Natural killer cell (primary cell): ENCODE measurements at regions of chr19 and their contacts with region 1.

Region 1: DNA sequence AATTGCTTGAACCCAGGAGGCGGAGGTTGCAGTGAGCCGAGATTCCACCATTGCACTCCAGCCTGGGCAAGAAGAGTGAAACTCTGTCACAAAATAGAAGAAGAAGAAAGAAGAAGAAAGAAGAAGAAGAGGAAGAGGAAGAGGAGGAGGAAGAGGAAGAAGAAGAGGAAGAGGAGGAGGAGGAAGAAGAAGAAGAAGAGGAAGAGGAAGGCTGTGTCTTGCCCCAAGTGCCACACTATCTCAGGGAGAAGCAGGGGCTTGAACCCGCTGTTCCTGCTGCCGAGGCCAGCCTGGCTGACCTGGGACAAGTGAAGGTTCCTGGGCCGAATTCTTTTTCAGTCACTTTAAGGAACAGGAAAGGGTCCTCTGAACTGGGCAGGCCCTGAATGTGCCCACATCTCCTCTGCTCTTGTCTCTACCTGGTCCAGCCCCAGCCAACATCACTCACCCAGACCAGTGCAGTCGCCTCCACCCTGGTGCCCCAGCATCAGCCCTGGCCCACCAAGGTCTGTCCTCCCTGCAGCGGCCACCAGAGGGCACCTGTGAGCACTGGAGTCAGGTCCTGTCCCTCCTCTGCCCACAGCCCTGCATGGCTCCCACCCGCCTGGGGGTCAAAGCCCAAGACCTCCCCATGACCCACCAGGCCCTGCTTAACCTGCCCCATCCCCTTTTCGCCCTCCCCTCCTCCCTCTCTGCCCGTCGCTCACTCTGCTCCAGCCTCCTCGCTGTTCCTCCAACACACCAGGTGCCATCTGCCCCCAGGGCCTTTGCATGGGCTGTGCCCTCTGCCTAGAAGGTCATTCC is 20.0 kb downstream of the TICAM1 start:
- DNase-seq: peak; percentile 88 to 89
- ATAC-seq: peak; percentile 77 to 87 (median 83)
- H3K4me3 ChIP-seq: no peak overlapping the region
- H3K4me3 Mint-ChIP-seq: no peak overlapping the region
- H3K27ac ChIP-seq: no peak overlapping the region
- H3K27ac Mint-ChIP-seq: no peak overlapping the region
- H3K4me1 ChIP-seq: peaks cover 16% of the 10 kb centered on the region
- H3K4me1 Mint-ChIP-seq: peaks cover 5 to 26% of the 10 kb centered on the region in 2 donors
- H3K27me3 ChIP-seq: no peaks in the 10 kb centered on the region
- H3K27me3 Mint-ChIP-seq: no peaks in the 10 kb centered on the region
- CTCF ChIP-seq: peak; percentile 85

Region 2: GRCh38 chr19:4851551-4852290 is 40.2 kb after region 1 on chr19:
- intact Hi-C with region 1: loop called (anchors 1 kb)
- DNase-seq: peak; percentile 74 to 87
- ATAC-seq: peak; percentile 78 to 97 (median 94)
- H3K4me3 ChIP-seq: no peak overlapping the region
- H3K4me3 Mint-ChIP-seq: no peak overlapping the region
- H3K27ac ChIP-seq: no peak overlapping the region
- H3K27ac Mint-ChIP-seq: no peak overlapping the region
- H3K4me1 ChIP-seq: no peaks in the 10 kb centered on the region
- H3K4me1 Mint-ChIP-seq: peaks cover 0 to 5% of the 10 kb centered on the region in 2 donors
- H3K27me3 ChIP-seq: no peaks in the 10 kb centered on the region
- H3K27me3 Mint-ChIP-seq: no peaks in the 10 kb centered on the region
- CTCF ChIP-seq: peak; percentile 81

Region 3: DNA sequence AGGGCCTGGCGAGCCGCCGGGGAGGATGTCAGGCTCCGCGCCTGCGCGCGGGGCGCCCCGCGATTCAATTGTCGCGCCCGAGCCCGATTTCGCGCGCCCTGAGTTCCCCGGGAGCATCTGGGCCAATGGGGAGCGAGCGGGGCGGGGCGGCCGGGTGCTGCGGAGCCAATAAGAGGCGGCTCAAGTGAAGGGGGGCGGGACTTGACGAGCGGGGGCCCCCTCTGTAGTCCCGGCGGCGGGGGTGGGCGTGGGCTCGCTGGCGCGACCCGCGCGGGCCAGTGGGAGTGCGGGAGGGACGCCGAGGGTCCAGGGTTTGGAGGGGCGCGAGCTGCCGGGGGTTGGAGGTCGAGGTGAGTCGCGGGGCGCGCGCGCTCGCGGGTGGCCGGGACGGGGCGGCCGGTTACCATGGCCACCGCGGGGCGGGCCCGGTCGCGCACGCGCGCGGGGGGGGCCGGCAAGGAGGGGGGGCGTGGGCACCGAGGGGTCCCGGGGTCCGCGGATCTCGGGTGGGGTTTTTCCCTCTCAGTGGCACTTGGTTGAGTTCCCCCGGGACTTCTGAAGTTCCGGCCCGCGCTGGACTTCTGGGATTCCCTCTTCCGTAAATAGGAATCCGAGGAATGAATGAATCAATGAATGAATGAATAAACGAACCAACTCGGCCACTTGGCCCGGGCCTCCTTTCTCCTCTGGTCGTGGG is 98.5 kb after region 1 on chr19:
- intact Hi-C with region 1: loop called (anchors 2 kb)
- DNase-seq: peak; percentile 95
- ATAC-seq: peak; percentile 92 to 95 (median 95)
- H3K4me3 ChIP-seq: peak overlapping the region; percentile 25
- H3K4me3 Mint-ChIP-seq: peak overlapping the region; percentile 88
- H3K27ac ChIP-seq: no peak overlapping the region
- H3K27ac Mint-ChIP-seq: peak overlapping the region in 1 of 2 donors; percentile 98
- H3K4me1 ChIP-seq: peaks cover 56% of the 10 kb centered on the region
- H3K4me1 Mint-ChIP-seq: peaks cover 52 to 59% of the 10 kb centered on the region in 2 donors
- H3K27me3 ChIP-seq: no peaks in the 10 kb centered on the region
- H3K27me3 Mint-ChIP-seq: no peaks in the 10 kb centered on the region
- CTCF ChIP-seq: no peak

Region 4: DNA sequence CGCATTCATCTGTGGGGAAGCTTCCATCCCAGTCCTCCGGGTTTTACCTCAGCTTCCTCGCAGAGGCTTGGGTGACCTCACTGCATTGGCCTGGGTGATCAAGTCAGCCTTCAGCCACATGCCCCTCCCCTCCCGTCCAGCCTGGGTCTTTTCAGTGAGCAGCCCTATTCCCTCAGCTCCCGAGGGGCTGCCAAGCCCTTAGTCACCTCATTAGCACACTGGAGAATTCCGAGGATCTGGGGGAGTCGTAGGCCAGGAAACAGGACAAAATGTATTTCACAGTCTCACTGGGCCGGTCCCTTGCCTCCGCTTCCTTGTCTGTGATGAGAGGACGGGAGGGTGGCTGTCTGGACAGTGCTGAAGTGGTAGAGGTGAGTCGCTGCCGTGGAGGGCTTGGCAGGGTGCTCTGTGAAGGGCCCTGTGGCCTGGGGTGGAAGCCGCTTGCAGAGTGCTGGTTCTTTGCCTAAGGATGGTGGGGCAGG is 177.3 kb after region 1 on chr19:
- intact Hi-C with region 1: no loop called
- DNase-seq: no peak
- ATAC-seq: peak in 2 of 3 donors; percentile 26 to 64
- H3K4me3 ChIP-seq: no peak overlapping the region
- H3K4me3 Mint-ChIP-seq: peak overlapping the region; percentile 59
- H3K27ac ChIP-seq: no peak overlapping the region
- H3K27ac Mint-ChIP-seq: peak overlapping the region; percentile 74 to 81
- H3K4me1 ChIP-seq: peaks cover 26% of the 10 kb centered on the region
- H3K4me1 Mint-ChIP-seq: peaks cover 49 to 59% of the 10 kb centered on the region in 2 donors
- H3K27me3 ChIP-seq: no peaks in the 10 kb centered on the region
- H3K27me3 Mint-ChIP-seq: no peaks in the 10 kb centered on the region
- CTCF ChIP-seq: no peak

Region 5: GRCh38 chr19:5031231-5032100 is 219.9 kb after region 1 on chr19:
- intact Hi-C with region 1: loop called (anchors 1 kb)
- DNase-seq: peak; percentile 81 to 88
- ATAC-seq: peak; percentile 86 to 96 (median 92)
- H3K4me3 ChIP-seq: no peak overlapping the region
- H3K4me3 Mint-ChIP-seq: no peak overlapping the region
- H3K27ac ChIP-seq: no peak overlapping the region
- H3K27ac Mint-ChIP-seq: no peak overlapping the region
- H3K4me1 ChIP-seq: peaks cover 10% of the 10 kb centered on the region
- H3K4me1 Mint-ChIP-seq: peaks cover 11 to 23% of the 10 kb centered on the region in 2 donors
- H3K27me3 ChIP-seq: no peaks in the 10 kb centered on the region
- H3K27me3 Mint-ChIP-seq: no peaks in the 10 kb centered on the region
- CTCF ChIP-seq: peak; percentile 94